ENCODE measurements at regions of chr7 and their contacts with region 1.

Region 1: GRCh38 chr7:139340037-139340807 is 915 bp upstream of the FMC1 start:
- DNase-seq: peak; percentile 97
- H3K4me3 Mint-ChIP-seq: peak overlapping the region; percentile 91
- H3K27ac Mint-ChIP-seq: peak overlapping the region; percentile 100
- H3K4me1 Mint-ChIP-seq: peaks cover 31% of the 10 kb centered on the region
- H3K27me3 Mint-ChIP-seq: peaks cover 8% of the 10 kb centered on the region

Region 2: DNA sequence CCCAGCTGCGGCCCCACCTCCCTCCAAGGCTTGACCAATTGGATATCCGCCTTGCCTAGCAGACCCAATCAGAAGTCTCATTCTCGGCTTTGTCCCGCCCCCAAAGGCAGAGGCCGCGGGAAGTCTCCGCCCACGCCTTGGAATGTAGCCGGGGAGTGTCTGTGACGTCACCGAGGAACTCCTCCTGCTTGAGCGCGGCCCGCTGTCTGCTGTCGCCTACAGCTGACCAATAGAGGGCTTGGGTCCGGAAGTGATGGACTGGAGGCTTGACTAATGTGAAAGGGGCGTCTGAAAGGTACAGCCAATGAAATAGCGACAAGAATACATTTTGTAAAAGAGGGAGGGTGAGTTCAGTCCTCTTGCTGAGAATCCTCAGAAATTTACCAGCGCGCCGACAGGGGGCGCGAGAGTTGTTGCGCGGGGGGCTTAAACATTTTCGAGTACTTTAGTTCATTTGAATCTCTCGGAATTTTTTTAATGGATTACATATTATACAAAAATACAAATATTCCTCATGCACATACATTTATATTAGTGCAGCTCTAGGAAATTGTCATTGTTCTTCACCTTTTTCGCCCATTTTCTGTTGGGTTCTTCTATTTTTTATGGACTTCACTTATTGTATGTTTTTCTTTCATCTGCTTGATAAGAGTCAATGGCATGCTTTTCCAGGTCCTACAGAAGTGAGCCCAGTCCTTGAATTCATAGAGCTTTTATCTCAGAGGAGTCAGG is 1338.0 kb before region 1 on chr7:
- intact Hi-C with region 1: loop called (anchors 1 kb)
- DNase-seq: peak; percentile 98
- H3K4me3 Mint-ChIP-seq: peak overlapping the region; percentile 94
- H3K27ac Mint-ChIP-seq: peak overlapping the region; percentile 92
- H3K4me1 Mint-ChIP-seq: peaks cover 38% of the 10 kb centered on the region
- H3K27me3 Mint-ChIP-seq: no peaks in the 10 kb centered on the region

Region 3: DNA sequence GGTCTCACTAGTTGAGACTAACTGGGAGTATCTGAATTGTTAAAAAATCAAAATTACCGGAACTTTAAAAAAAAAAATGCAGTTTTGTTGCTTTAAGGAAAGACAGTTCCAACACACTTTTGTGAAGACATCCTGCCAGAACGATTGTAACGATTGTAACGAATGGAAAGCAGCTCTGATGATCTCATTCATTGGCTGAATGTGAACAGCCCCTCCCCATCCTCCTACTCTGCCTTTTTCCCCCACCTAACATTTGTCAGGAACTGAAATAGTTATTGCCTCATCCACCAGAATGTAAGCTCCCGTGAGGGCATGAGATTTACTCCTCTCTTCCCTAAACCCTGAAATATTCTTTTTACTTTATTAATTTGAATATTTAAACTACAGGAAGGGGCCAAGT is 281.3 kb before region 1 on chr7:
- intact Hi-C with region 1: no loop called
- DNase-seq: no peak
- H3K4me3 Mint-ChIP-seq: no peak overlapping the region
- H3K27ac Mint-ChIP-seq: peak overlapping the region; percentile 61
- H3K4me1 Mint-ChIP-seq: peaks cover 57% of the 10 kb centered on the region
- H3K27me3 Mint-ChIP-seq: no peaks in the 10 kb centered on the region

Region 4: DNA sequence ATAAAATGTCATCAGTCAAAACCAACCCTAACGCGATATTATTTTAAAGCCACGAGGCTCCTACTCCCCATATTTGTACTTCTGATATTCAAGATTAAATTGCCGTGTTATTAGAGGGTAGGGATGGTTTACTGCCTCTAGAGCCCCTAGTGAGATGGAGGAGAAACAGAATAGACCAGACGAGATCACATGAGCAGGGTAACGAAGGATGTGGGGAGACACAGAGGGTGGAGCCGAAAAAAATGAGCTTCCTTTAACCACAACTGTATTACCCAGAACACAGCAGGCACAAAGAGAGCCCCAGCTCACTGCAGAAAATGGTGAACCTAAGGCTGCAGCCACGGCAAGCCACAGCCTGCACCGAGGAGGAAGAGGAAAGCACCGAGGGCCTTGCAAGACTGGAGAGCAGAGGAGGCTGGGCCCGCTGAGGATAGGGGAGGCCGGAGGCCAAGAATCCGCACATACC is 245.0 kb before region 1 on chr7:
- intact Hi-C with region 1: loop called (anchors 1 kb)
- DNase-seq: peak; percentile 86
- H3K4me3 Mint-ChIP-seq: peak overlapping the region; percentile 80
- H3K27ac Mint-ChIP-seq: peak overlapping the region; percentile 97
- H3K4me1 Mint-ChIP-seq: peaks cover 87% of the 10 kb centered on the region
- H3K27me3 Mint-ChIP-seq: no peaks in the 10 kb centered on the region

Region 5: GRCh38 chr7:139133335-139134139 is 206.7 kb before region 1 on chr7:
- intact Hi-C with region 1: loop called (anchors 1 kb)
- DNase-seq: peak; percentile 81
- H3K4me3 Mint-ChIP-seq: peak overlapping the region; percentile 89
- H3K27ac Mint-ChIP-seq: peak overlapping the region; percentile 71
- H3K4me1 Mint-ChIP-seq: peaks cover 31% of the 10 kb centered on the region
- H3K27me3 Mint-ChIP-seq: peaks cover 2% of the 10 kb centered on the region

Region 6: GRCh38 chr7:139359366-139360209 is 19.4 kb after region 1 on chr7 and contains the start of gene LUC7L2:
- intact Hi-C with region 1: loop called (anchors 1 kb)
- DNase-seq: peak; percentile 99
- H3K4me3 Mint-ChIP-seq: peak within 1 kb of the TSS; percentile 88
- H3K27ac Mint-ChIP-seq: peak within 1 kb of the TSS; percentile 97
- H3K4me1 Mint-ChIP-seq: peaks cover 29% of the 10 kb centered on the region
- H3K27me3 Mint-ChIP-seq: no peaks in the 10 kb centered on the region
- total RNA-seq, gene LUC7L2: 179 and 194 TPM in 2 replicates

Region 7: DNA sequence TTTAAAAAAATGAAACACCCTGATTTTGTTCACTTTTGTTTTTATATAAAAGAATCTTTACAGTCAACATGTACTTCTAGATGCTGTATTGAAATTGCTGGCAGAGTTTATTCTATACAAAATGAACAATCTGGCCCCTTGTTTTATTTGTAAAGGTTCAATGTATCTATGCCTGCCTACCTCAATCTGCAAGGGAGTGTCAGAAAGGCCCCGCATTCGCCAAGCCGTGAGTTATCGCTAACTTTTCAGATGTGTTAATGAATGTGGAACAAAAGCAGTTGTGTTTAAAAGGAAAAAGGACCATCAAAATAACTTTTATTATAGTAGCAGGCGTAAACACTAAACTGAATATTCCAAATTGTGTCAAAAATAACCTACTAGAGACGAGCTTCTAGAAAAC is 34.0 kb after region 1 on chr7:
- intact Hi-C with region 1: no loop called
- DNase-seq: no peak
- H3K4me3 Mint-ChIP-seq: no peak overlapping the region
- H3K27ac Mint-ChIP-seq: no peak overlapping the region
- H3K4me1 Mint-ChIP-seq: peaks cover 27% of the 10 kb centered on the region
- H3K27me3 Mint-ChIP-seq: no peaks in the 10 kb centered on the region